Cardiac septum (tissue), 1 donor: ENCODE measurements at regions of chr16 and their contacts with region 1.

Region 1: DNA sequence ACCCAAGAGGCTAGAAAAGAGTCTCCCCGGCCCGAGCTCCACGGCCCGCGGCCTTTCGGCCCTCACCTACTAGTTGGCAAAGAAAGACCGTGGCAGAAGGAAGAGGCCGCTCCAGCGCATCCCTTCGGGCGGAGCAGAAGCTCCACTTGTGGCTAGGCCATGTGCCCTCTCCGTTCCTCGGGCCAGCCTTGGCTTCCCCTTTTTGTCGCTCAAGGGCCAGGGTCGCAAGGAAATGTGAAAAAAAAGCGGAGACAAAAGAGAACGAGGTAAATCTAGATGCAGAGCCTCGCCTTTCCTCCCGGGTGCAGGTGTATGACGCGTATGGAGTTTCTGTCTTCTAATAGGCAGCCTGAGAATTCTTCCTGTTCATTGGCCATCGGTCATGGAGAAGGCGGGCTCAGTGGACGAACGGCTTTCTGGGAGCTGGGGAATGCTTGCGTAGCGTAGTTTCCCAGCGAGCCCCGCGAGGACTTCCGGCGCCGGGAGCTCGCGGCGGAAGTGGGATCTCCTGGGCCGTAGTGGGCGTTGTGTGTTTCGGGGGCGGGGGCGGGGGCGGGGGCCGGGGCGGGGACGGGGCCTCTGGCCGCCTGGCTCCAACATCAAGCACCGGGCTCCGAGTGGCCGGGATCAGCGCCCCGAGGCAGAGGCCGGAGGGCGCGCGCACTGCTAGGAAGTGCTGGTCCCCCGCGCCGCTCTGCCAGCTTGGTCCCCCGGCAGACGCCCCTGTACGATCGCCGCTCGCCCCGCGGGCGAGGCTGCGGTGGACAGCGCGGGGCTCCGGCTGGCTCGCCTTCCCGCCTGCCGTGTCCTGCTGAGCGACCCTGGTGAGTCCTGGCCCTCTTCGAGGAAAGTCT is at the start of gene ZNF213:
- DNase-seq: peak; percentile 97
- total RNA-seq, gene ZNF213: 7.5 TPM

Region 2: DNA sequence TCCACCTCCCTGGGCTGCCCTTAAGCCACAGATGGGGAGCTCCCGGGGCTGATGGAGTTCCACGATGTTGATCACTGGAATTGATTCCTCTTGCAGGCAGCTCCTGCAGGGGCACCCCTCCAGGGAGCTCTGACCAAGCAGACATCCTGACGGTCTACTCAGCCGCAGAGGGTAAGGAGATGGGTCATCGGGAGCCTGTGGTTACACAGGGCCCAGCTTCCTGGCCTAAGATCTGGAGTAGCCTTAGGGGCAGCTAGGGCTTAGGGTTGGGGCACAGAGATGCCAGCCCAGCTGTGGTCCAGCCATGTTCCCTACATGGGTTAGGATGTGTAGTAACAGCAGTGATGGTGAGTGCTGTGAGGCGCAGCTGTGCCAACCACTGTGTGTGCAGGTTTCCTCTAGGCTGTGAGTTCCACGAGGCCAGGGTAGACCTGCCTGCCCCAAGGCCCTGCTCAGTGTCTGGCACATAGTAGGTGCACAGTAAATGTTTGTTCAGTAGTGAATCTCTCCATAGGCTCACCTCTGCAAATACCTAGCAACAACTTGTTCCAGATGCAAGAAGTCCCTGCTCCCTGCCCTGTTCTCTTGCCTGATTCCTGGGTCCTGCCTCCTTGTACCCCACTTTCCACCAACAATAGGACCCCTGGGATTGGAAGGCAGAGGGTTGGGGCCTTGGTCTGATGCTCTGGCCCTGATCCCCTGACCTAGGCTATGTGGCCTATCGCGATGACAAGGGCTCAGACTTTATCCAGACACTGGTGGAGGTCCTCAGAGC is 13.6 kb after region 1 on chr16:
- intact Hi-C with region 1: loop called (anchors 1 kb)
- DNase-seq: no peak

Region 3: GRCh38 chr16:3165111-3165822 is 30.5 kb after region 1 on chr16:
- intact Hi-C with region 1: loop called (anchors 5 kb)
- DNase-seq: no peak

Region 4: GRCh38 chr16:3256146-3256865 is 121.5 kb after region 1 on chr16 and contains the start of gene MEFV:
- intact Hi-C with region 1: no loop called
- DNase-seq: peak; percentile 81
- total RNA-seq, gene MEFV: 1.00 TPM

Region 5: GRCh38 chr16:3413730-3414379 is 279.1 kb after region 1 on chr16:
- intact Hi-C with region 1: no loop called
- DNase-seq: no peak